ENCODE measurements at regions of chr2 and their contacts with region 1.

Region 1: DNA sequence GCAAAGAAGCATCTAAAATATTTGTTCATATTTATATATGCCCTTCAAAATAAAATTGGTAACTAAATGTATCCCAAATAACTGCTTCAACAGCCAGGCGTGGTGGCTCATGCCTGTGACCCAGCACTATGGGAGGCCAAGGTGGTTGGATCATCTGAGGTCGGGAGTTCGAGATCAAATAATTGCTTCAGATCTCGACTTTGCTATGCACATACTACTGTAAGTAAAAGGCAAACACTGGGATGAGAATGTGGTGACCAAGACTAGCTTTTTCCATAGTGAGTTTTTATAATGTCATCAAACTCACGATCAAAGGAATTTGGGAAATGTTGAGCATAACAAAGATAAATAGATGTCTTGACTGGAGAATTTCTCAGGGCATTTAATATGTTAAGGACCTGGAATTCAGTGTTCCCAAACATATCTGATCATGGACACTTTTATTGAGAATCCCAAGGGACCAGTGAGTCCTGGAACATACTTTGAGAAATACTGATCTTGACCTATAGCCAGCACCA is 205.6 kb downstream of the ARHGAP15 start:
- DNase-seq: no peak
- ATAC-seq: no peak
- H3K4me3 ChIP-seq: no peak overlapping the region
- H3K4me3 Mint-ChIP-seq: no peak overlapping the region
- H3K27ac ChIP-seq: no peak overlapping the region
- H3K27ac Mint-ChIP-seq: no peak overlapping the region
- H3K4me1 ChIP-seq: peaks cover 23% of the 10 kb centered on the region
- H3K4me1 Mint-ChIP-seq: peaks cover 79% of the 10 kb centered on the region
- H3K27me3 ChIP-seq: no peaks in the 10 kb centered on the region
- H3K27me3 Mint-ChIP-seq: no peaks in the 10 kb centered on the region
- CTCF ChIP-seq: no peak

Region 2: DNA sequence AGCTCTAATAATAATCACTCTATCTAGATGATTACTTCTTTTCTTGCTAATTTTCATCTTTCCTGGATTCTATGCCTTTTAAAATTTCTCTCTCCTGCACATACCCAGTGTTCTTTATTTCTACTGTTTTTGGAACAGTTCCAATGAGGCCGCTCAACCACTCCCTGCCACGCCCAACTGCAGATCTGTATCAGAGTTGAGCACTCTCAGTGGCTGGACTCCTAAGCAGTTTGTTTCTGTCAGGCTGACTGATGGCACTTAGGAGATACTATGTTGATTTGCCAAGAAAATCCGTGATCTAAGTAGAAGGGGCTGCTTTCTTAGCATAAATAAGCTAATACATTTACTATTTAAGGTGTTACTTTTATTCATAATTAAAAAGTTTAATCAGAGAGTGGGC is 12.8 kb before region 1 on chr2:
- CTCF ChIA-PET with region 1: no interaction called
- POLR2A ChIA-PET with region 1: no interaction called
- intact Hi-C with region 1: loop called in 1 of 2 experiments (anchors 2 kb)
- DNase-seq: no peak
- ATAC-seq: no peak
- H3K4me3 ChIP-seq: no peak overlapping the region
- H3K4me3 Mint-ChIP-seq: no peak overlapping the region
- H3K27ac ChIP-seq: no peak overlapping the region
- H3K27ac Mint-ChIP-seq: peak overlapping the region; percentile 82
- H3K4me1 ChIP-seq: no peaks in the 10 kb centered on the region
- H3K4me1 Mint-ChIP-seq: peaks cover 69% of the 10 kb centered on the region
- H3K27me3 ChIP-seq: no peaks in the 10 kb centered on the region
- H3K27me3 Mint-ChIP-seq: no peaks in the 10 kb centered on the region
- CTCF ChIP-seq: no peak

Region 3: GRCh38 chr2:143345887-143346787 is 11.4 kb after region 1 on chr2:
- CTCF ChIA-PET with region 1: no interaction called
- POLR2A ChIA-PET with region 1: no interaction called
- intact Hi-C with region 1: loop called in 1 of 2 experiments (anchors 2 kb)
- DNase-seq: no peak
- ATAC-seq: no peak
- H3K4me3 ChIP-seq: no peak overlapping the region
- H3K4me3 Mint-ChIP-seq: no peak overlapping the region
- H3K27ac ChIP-seq: no peak overlapping the region
- H3K27ac Mint-ChIP-seq: no peak overlapping the region
- H3K4me1 ChIP-seq: no peaks in the 10 kb centered on the region
- H3K4me1 Mint-ChIP-seq: peaks cover 50% of the 10 kb centered on the region
- H3K27me3 ChIP-seq: no peaks in the 10 kb centered on the region
- H3K27me3 Mint-ChIP-seq: no peaks in the 10 kb centered on the region
- CTCF ChIP-seq: no peak